Calu3 (cell line): ENCODE measurements at regions of chr10 and their contacts with region 1.

Region 1: GRCh38 chr10:81820420-81820819 is 54.6 kb upstream of the NRG3 start:
- DNase-seq: peak; percentile 40
- H3K4me3 Mint-ChIP-seq: no peak overlapping the region
- H3K27ac Mint-ChIP-seq: no peak overlapping the region
- H3K4me1 Mint-ChIP-seq: no peaks in the 10 kb centered on the region
- H3K27me3 Mint-ChIP-seq: no peaks in the 10 kb centered on the region
- CTCF ChIP-seq: peak; percentile 58

Region 2: DNA sequence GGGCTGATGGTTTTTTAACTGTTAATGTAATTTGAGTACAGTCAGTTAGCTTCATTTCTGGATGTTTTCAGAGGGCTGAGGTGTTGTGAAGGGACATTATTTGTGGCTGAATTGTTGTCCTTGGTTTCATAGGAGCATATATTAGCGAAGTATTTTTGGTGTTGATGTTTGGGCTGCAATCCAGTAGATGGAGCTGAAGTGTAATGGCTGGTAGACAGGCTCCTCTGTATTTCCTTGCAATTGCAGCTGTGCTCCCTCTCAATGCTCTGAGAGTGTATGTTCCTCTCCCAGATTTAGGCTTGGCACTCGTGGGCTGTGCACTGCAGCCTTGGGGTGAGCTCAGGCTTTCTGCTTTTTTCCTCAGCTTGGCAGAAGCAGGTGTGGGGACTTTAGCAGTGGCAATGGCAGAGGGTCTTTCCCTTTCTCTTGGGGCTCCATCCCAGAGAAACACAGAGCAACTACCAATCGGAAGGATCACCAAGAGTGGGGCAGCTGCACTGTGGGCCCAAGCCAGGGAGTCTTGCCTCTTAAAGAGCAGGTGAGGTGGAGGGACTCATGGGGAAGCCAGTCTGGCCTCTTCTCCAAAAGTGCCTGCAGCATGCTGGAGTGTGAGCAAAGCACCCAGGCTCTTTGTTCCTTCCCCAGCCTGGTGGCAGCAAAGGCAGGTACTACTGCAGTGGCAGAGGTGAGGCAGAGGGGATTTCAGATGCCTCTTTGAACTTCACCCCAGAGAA is 738.4 kb before region 1 on chr10:
- CTCF ChIA-PET with region 1: no interaction called
- intact Hi-C with region 1: loop called (anchors 1 kb)
- DNase-seq: no peak
- H3K4me3 Mint-ChIP-seq: no peak overlapping the region
- H3K27ac Mint-ChIP-seq: no peak overlapping the region
- H3K4me1 Mint-ChIP-seq: peaks cover 22% of the 10 kb centered on the region
- H3K27me3 Mint-ChIP-seq: no peaks in the 10 kb centered on the region
- CTCF ChIP-seq: peak; percentile 29

Region 3: DNA sequence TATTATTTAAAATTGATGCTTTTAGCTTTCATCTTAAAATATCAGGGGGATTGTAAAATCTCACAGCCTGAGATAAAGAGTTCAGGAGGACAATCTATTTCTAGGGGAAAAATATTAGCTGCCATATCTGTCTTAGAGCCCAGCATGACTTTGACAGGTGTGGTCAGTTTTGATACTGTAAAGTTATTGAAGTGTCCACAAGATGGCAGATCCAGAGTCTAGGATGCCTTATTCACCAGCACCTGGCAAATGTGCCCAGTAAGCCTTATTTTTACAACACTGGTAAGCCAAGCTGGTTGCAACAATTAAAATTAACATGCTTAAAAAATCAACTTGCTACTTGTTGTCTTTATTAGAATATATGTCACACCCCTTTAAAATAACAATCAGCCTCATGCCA is 703.4 kb before region 1 on chr10:
- CTCF ChIA-PET with region 1: interaction called, 7 read pairs
- intact Hi-C with region 1: loop called (anchors 5 kb)
- DNase-seq: peak; percentile 21
- H3K4me3 Mint-ChIP-seq: no peak overlapping the region
- H3K27ac Mint-ChIP-seq: no peak overlapping the region
- H3K4me1 Mint-ChIP-seq: peaks cover 11% of the 10 kb centered on the region
- H3K27me3 Mint-ChIP-seq: no peaks in the 10 kb centered on the region
- CTCF ChIP-seq: no peak

Region 4: GRCh38 chr10:81414038-81414437 is 406.4 kb before region 1 on chr10:
- CTCF ChIA-PET with region 1: interaction called, 14 read pairs
- intact Hi-C with region 1: loop called (anchors 1 kb)
- DNase-seq: peak; percentile 34
- H3K4me3 Mint-ChIP-seq: no peak overlapping the region
- H3K27ac Mint-ChIP-seq: no peak overlapping the region
- H3K4me1 Mint-ChIP-seq: no peaks in the 10 kb centered on the region
- H3K27me3 Mint-ChIP-seq: no peaks in the 10 kb centered on the region
- CTCF ChIP-seq: peak; percentile 57